Activated CD8-positive, alpha-beta memory T cell treated with anti-CD3 and anti-CD28 coated beads, Interleukin-2, amount 10 ng/mL, durations not matched to agents 7 days and 5 days (primary cell): ENCODE measurements at regions of chr1 and their contacts with region 1.

Region 1: DNA sequence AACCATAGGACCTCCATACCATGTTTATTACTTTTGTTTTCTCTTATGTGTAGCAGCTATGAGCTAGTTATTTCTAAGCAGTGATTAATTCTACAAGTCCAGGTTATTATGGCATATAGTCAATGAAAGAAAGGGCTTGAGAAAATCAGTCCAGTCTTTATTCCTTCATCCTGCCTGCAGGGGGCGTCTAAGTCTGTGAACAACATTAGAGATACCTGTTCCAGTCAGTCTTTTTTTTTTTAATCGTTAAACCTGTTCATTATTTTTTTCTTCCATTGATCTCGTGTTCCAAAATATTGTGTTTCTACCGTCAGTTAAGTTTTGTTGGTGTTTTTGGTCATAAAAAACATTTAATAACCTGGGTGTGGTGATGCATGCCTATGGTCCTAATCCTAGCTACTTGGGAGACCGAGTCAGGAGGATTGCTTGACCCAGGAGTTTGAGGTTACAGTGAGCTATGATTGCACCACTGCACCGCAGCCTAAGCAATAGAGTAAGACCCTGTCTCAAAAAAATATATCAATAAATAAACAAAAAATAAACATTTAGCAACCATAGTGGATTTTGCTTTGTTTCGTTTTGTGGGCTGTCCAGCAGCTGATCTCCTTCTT is 29.4 kb upstream of the CD2 start:
- DNase-seq: peak; percentile 86
- ATAC-seq: peak; percentile 83
- H3K4me3 Mint-ChIP-seq: no peak overlapping the region
- H3K27ac Mint-ChIP-seq: no peak overlapping the region
- H3K4me1 Mint-ChIP-seq: peaks cover 25% of the 10 kb centered on the region
- H3K27me3 Mint-ChIP-seq: no peaks in the 10 kb centered on the region

Region 2: GRCh38 chr1:116710420-116711262 is 14.2 kb before region 1 on chr1:
- CTCF ChIA-PET with region 1: interaction called, 10 read pairs
- DNase-seq: no peak
- ATAC-seq: no peak
- H3K4me3 Mint-ChIP-seq: no peak overlapping the region
- H3K27ac Mint-ChIP-seq: no peak overlapping the region
- H3K4me1 Mint-ChIP-seq: peaks cover 3% of the 10 kb centered on the region
- H3K27me3 Mint-ChIP-seq: no peaks in the 10 kb centered on the region